ENCODE measurements at regions of chr4 and their contacts with region 1.

Region 1: DNA sequence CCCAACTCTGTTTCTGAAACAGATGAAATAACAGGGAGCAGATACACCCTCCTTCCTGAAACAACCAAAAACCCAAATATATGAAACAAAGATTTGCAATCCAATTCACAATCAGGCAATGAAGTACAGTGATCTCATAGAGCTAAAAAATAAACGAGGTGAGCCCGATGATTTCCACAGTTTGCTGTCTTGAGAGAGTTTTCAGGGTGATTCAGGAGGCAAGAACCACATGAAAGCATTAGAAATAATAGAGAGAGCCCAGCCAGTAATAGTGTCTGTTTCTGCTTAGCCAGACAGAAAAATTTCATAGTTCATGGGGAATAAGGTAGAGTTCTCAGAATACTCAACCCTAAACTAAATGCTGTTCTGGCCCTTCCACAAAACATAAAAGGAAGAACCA is 296.2 kb downstream of the PDHA2 start:
- DNase-seq: no peak
- H3K4me3 ChIP-seq: no peak overlapping the region
- H3K27ac ChIP-seq: no peak overlapping the region
- H3K4me1 ChIP-seq: no peaks in the 10 kb centered on the region
- H3K27me3 ChIP-seq: no peaks in the 10 kb centered on the region
- CTCF ChIP-seq: no peak
- POLR2A ChIP-seq: no peak

Region 2: GRCh38 chr4:96189761-96190160 is 53.7 kb after region 1 on chr4:
- intact Hi-C with region 1: loop called (anchors 2 kb)
- DNase-seq: no peak
- H3K4me3 ChIP-seq: no peak overlapping the region
- H3K27ac ChIP-seq: no peak overlapping the region
- H3K4me1 ChIP-seq: no peaks in the 10 kb centered on the region
- H3K27me3 ChIP-seq: no peaks in the 10 kb centered on the region
- CTCF ChIP-seq: no peak
- POLR2A ChIP-seq: no peak